Transverse colon (tissue), 4 donors: ENCODE measurements at regions of chr16 and their contacts with region 1.

Region 1: DNA sequence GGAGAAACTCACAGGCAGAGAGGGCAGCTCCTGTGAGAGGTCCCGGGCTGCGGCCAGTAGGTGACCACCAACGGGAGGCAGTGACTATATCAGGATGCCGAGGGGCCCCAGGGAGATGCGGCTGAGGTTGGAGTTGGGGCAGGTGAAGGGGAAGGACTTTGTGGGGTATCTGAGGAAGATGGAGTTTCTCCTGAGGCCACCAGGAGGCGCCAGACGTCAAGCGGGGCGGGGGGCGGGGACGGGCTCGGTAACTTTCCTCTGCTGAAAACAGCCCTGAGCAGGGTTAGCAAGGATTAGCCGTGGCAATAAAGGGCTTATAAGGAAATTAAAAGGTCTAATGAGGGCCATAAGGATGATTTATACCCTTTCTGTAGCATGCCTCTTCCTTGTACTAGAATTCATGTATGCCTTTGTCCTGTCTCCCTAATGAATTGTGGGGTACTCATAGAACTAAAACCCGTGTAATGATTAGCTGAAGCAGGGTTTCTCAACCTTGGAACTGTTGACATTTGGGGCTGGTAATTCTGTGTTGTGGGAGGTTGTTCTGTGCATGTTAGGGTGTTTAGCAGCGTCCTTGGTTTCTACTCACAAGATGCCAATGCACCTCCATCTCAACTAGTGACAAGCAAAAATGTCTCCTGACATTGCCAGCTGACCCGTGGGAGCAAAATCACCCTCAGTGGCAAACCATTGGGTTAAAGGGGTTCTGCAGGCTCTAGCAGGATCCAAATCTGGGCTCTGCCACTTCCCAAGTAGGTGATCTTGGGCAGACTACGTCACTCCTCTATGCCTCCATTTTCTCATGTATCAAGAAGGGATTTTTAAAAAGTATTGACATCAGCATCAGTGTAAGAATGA is 74.8 kb upstream of the GRIN2A start:
- DNase-seq: peak; percentile 26
- H3K4me3 ChIP-seq: no peak overlapping the region
- H3K27ac ChIP-seq: no peak overlapping the region
- H3K4me1 ChIP-seq: peaks cover 0 to 6% (median 0%) of the 10 kb centered on the region in 4 donors
- H3K27me3 ChIP-seq: peaks cover 15% of the 10 kb centered on the region
- CTCF ChIP-seq: peak; percentile 65 to 86 (median 78)
- EP300 ChIP-seq: no peak
- POLR2A ChIP-seq: no peak

Region 2: GRCh38 chr16:10226141-10226986 is 30.6 kb before region 1 on chr16:
- in situ Hi-C with region 1: no loop called
- intact Hi-C with region 1: no loop called
- DNase-seq: no peak
- H3K4me3 ChIP-seq: no peak overlapping the region
- H3K27ac ChIP-seq: no peak overlapping the region
- H3K4me1 ChIP-seq: no peaks in the 10 kb centered on the region
- H3K27me3 ChIP-seq: peaks cover 6% of the 10 kb centered on the region
- CTCF ChIP-seq: no peak
- EP300 ChIP-seq: no peak
- POLR2A ChIP-seq: no peak

Region 3: DNA sequence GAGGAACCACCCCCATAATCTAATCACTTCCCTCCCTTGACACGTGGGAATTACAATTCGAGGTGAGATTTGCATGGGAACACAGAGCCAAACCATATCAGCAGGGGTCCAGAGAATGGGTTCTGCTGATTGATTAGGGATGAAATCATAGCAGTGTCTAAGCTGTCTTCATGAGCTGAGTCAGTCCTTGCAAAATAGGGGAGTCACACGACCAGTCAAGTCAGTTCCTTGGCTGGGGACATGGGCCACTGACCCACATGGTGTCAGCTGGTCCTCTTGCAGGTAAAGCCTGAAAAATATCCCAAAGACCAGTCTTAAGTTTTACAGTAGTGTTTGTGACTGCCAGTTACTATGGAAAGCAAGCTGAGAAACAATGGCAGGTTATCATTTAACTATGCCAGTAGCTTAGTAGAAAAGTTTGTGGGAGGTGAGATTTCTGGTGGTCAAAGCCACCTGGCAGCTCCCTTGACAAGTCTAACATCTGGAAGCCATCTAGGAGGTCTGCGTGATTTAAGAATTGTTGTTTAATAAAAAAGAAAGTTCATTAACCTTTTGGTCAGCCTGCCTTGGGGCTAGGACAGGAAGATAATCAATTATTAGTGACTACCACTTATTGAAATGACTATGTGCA is 113.2 kb after region 1 on chr16:
- in situ Hi-C with region 1: no loop called
- intact Hi-C with region 1: no loop called
- DNase-seq: no peak
- H3K4me3 ChIP-seq: no peak overlapping the region
- H3K27ac ChIP-seq: no peak overlapping the region
- H3K4me1 ChIP-seq: no peaks in the 10 kb centered on the region
- H3K27me3 ChIP-seq: no peaks in the 10 kb centered on the region
- CTCF ChIP-seq: no peak
- EP300 ChIP-seq: no peak
- POLR2A ChIP-seq: no peak

Region 4: GRCh38 chr16:10509534-10510025 is 252.6 kb after region 1 on chr16:
- in situ Hi-C with region 1: loop called in 3 of 4 experiments (anchors 5 to 10 kb)
- intact Hi-C with region 1: no loop called
- DNase-seq: peak; percentile 53
- H3K4me3 ChIP-seq: no peak overlapping the region
- H3K27ac ChIP-seq: no peak overlapping the region
- H3K4me1 ChIP-seq: peaks cover 0 to 4% (median 2%) of the 10 kb centered on the region in 4 donors
- H3K27me3 ChIP-seq: no peaks in the 10 kb centered on the region
- CTCF ChIP-seq: peak; percentile 75 to 85 (median 81)
- EP300 ChIP-seq: no peak
- POLR2A ChIP-seq: no peak

Region 5: DNA sequence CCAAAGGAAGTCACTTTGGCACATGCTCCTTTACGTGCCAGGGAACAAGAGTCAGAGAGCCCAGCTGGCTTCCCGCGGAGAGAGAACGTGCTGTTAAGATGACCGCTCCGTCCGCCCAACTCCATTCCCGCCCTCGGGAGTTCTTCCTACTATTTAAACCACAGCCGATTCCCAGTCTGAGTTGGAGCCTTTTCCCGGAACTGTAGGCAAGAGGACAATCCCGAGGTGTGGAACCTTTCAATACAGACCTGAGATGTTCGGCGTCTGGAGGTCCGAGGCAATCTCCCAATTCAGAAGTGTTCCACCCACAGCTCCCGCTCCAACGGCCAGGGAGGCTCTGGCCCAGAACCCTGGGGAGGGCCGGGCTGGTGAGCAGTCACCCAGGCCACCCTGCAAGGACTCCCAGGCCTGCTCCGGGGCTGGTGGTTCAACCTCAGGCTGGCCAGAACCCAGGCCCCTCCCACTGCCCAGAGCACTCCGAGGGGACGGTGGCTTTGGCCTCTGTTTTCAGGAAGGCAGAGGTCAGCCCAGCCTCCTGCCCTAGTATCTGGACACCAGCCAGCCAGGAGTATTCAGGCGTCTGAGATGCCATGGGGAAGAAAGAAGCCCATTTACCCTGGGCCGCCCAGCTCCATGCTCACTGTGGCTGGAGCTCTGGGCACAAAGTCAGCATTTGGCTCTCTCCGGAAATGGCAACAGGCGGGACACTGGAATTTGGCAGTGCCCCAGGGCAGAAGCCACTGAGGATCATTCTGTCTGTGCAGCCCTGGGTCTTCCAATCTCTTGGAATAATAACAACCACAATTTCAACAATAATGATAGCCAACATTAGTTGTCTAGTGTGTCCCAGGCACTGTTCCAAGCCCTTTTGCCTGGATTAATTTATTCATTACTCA is 302.0 kb after region 1 on chr16:
- in situ Hi-C with region 1: no loop called
- intact Hi-C with region 1: no loop called
- DNase-seq: peak; percentile 36
- H3K4me3 ChIP-seq: no peak overlapping the region
- H3K27ac ChIP-seq: peak overlapping the region; percentile 60 to 85 (median 76)
- H3K4me1 ChIP-seq: peaks cover 4 to 35% (median 12%) of the 10 kb centered on the region in 4 donors
- H3K27me3 ChIP-seq: no peaks in the 10 kb centered on the region
- CTCF ChIP-seq: no peak
- EP300 ChIP-seq: no peak
- POLR2A ChIP-seq: no peak

Region 6: DNA sequence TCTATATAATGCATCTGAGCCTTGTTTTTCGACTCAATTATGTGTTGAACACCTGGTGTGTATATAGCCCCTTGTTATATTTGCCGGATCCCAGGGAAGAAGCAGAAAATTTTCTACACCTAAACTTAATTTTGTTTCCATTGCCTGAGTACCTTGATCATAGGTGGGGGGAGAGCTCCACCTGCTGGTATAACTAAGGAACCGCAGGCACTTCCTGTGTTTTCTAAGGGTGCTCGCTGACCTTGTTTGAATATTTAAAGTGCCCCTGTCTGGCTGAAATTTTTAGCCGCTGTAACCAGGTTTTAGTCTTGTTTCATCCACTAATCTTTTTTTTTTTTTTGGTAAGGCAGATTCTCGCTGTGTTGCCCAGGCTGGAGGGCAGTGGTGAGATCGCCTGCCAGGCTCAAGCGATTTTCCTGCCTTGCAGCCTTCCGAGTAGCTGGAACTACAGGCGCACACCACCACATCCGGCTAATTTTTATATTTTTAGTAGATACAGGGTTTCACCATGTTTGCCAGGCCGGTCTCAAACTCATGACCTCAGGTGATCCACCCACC is 480.1 kb after region 1 on chr16:
- in situ Hi-C with region 1: loop called in 3 of 4 experiments (anchors 10 to 25 kb)
- intact Hi-C with region 1: no loop called
- DNase-seq: peak; percentile 71
- H3K4me3 ChIP-seq: peak overlapping the region in 3 of 4 donors; percentile 15 to 39 (median 30)
- H3K27ac ChIP-seq: peak overlapping the region; percentile 47 to 76 (median 66)
- H3K4me1 ChIP-seq: peaks cover 6 to 21% (median 7%) of the 10 kb centered on the region in 4 donors
- H3K27me3 ChIP-seq: no peaks in the 10 kb centered on the region
- CTCF ChIP-seq: peak; percentile 91 to 99 (median 95)
- EP300 ChIP-seq: no peak
- POLR2A ChIP-seq: no peak

Region 7: DNA sequence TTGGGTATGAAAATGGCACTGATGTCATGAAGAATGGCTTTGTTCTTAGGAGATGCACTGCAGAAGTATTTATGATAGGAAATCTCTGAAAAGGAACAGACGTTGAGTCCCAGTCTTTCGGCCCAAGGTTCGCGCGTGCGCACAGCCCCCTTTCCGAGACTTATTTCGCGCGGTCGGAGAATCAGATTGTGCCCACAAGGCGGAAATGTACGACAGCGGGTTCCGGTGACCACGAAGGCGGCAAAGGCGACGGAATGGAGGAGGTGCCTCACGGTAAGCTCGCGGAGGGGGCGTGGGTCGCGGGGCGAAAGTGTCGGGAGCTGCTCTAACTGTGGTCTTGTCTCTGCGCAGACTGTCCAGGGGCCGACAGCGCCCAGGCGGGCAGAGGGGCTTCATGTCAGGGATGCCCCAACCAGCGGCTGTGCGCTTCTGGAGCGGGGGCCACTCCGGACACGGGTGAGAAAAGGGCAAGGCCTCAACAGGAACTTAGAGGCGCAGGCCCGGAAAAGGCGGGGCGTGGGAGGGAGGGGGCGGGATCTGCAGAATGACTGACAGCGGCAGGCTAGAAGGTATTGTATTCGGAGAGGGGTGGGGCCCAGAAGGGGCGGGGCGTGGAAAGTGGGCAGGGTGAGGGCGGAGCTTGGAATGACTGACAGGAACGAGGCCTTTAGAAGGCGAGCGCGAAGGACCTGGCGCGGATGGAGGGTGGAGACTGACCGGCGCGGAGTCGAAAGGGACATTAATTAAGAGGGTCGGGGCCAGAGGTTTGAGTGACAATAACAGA is 486.8 kb after region 1 on chr16 and contains the start of gene NUBP1:
- in situ Hi-C with region 1: loop called in 3 of 4 experiments (anchors 10 to 25 kb)
- intact Hi-C with region 1: no loop called
- DNase-seq: peak; percentile 100
- H3K4me3 ChIP-seq: peak within 1 kb of the TSS; percentile 13 to 61 (median 52)
- H3K27ac ChIP-seq: peak within 1 kb of the TSS; percentile 88 to 98 (median 92)
- H3K4me1 ChIP-seq: peaks cover 5 to 24% (median 16%) of the 10 kb centered on the region in 4 donors
- H3K27me3 ChIP-seq: no peaks in the 10 kb centered on the region
- CTCF ChIP-seq: peak in 2 of 5 experiments; percentile 40 to 48
- EP300 ChIP-seq: no peak
- POLR2A ChIP-seq: peak; percentile 83
- total RNA-seq, gene NUBP1: 11.6 to 23.8 (median 22.5) TPM

Region 8: GRCh38 chr16:10876799-10877341 is 619.9 kb after region 1 on chr16 and contains the start of gene CIITA:
- in situ Hi-C with region 1: loop called in 1 of 4 experiments (anchors 25 kb)
- intact Hi-C with region 1: no loop called
- DNase-seq: peak; percentile 77
- H3K4me3 ChIP-seq: peak within 1 kb of the TSS in 2 of 4 donors; percentile 0 to 66
- H3K27ac ChIP-seq: peak within 1 kb of the TSS in 3 of 4 donors; percentile 43 to 69 (median 61)
- H3K4me1 ChIP-seq: peaks cover 0 to 29% (median 17%) of the 10 kb centered on the region in 4 donors
- H3K27me3 ChIP-seq: peaks cover 17% of the 10 kb centered on the region
- CTCF ChIP-seq: no peak
- EP300 ChIP-seq: no peak
- POLR2A ChIP-seq: peak; percentile 18
- total RNA-seq, gene CIITA: 1.2 to 26.9 (median 13.9) TPM